ENCODE measurements at regions of chr21 and their contacts with region 1.

Region 1: DNA sequence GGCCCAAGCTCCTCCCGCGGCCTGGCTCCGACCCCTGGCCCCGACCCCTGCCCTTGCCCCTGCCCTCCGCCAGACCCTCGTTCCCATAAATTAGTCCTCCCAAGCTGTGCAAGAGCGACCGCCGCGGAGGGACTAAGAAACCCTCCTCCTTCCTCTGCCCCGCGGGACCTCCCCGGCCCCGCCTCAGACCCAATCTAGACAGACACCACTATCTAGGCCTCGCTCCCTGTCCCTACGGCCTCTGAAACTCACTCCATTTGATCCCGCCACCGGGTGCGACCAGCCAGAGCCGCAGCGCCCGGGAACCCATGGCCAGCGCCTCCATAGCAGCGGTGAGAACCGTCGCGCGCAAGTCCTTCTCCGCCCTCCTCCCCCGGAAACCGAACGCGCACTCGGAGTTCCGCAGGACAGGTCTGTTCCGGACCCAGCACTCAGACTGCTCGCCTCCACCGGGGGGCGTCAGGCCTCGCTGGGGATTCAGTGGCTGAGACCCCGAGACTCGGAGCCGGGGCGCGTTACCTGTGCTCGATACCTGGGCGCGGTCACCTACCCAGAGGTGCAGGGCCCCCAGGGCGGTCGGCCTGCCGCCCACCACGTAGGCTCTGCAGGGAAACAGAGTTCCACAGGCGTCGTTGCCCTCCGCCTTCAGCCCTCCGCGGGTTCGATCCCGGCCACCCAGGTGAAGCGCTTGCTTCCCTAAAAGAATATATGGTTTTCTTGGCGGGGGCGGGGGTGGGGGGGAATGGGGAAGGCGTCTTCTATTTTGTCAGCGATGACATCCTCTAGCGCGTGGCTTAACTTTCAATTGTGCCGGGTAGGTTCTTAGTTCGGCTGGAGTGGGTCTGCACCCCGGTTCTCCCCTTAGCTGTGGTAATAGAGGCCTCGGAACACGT is at the start of gene MRPL39:
- DNase-seq: peak; percentile 91
- ATAC-seq: peak; percentile 92
- H3K4me3 ChIP-seq: peak within 1 kb of the TSS; percentile 99
- H3K27ac ChIP-seq: peak within 1 kb of the TSS; percentile 56
- H3K4me1 ChIP-seq: peaks cover 22% of the 10 kb centered on the region
- H3K27me3 ChIP-seq: no peaks in the 10 kb centered on the region
- CTCF ChIP-seq: peak; percentile 70
- total RNA-seq, gene MRPL39: 62.0 and 107 TPM in 2 replicates

Region 2: GRCh38 chr21:25360593-25360992 is 246.8 kb before region 1 on chr21:
- CTCF ChIA-PET with region 1: no interaction called
- POLR2A ChIA-PET with region 1: no interaction called
- intact Hi-C with region 1: loop called (anchors 1 kb)
- DNase-seq: peak; percentile 40
- ATAC-seq: peak; percentile 57
- H3K4me3 ChIP-seq: no peak overlapping the region
- H3K27ac ChIP-seq: no peak overlapping the region
- H3K4me1 ChIP-seq: peaks cover 26% of the 10 kb centered on the region
- H3K27me3 ChIP-seq: no peaks in the 10 kb centered on the region
- CTCF ChIP-seq: peak; percentile 52

Region 3: DNA sequence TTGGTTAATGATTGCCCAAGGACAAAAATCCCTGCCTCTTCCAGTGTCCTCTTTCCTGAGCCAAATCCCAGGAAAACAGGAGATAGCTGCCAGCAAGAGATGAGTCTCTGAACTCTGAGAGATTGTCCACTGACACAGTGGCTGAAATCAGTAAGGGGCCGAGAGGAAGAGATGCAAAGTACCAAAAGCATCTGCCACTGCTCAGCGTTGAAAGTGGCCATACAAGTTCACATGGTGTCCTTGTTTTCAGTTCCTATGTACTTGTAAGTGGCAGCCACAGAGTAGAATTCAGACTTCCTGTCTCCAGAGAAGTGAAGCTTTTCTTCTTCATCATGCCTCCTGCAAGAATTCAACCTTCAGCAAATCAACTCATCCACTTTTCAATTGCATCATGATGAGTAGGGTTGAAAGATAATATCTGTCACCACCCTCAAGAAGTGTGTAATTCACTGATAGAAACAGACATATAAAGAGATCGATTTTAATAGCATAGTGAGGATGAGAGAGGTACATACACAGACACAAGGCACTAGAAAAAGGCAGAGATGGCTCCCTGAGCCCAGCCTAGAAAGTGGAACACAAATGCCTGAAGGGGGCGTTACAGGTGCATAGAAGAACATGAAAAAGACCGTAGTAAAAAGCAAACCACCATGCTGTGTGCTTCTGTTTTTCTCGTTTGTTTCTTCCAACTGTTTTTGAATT is 185.9 kb before region 1 on chr21:
- CTCF ChIA-PET with region 1: no interaction called
- POLR2A ChIA-PET with region 1: no interaction called
- intact Hi-C with region 1: loop called (anchors 2 kb)
- DNase-seq: peak; percentile 78
- ATAC-seq: peak; percentile 93
- H3K4me3 ChIP-seq: no peak overlapping the region
- H3K27ac ChIP-seq: no peak overlapping the region
- H3K4me1 ChIP-seq: no peaks in the 10 kb centered on the region
- H3K27me3 ChIP-seq: no peaks in the 10 kb centered on the region
- CTCF ChIP-seq: peak; percentile 81

Region 4: DNA sequence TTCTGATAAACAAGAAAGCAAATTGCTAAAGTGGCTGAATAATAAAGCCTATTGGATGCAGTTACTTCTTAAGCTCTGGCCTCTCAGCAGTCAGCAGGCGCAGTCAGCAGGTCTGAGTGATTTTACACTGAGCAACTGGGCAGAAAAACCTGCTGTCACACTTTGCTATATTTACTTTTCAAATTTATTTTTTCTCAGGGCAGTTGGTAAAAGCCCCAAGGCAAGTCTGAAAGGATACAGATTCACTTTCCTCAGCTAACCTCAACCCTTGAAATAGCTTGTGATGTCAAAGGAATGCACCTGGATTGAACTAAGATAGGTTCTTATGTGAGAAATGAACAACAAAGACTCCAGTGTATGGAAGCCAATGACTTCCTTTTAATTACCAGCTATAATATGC is 93.3 kb after region 1 on chr21:
- CTCF ChIA-PET with region 1: no interaction called
- POLR2A ChIA-PET with region 1: no interaction called
- intact Hi-C with region 1: loop called (anchors 2 kb)
- DNase-seq: peak; percentile 82
- ATAC-seq: peak; percentile 60
- H3K4me3 ChIP-seq: no peak overlapping the region
- H3K27ac ChIP-seq: peak overlapping the region; percentile 76
- H3K4me1 ChIP-seq: peaks cover 28% of the 10 kb centered on the region
- H3K27me3 ChIP-seq: no peaks in the 10 kb centered on the region
- CTCF ChIP-seq: no peak

Region 5: DNA sequence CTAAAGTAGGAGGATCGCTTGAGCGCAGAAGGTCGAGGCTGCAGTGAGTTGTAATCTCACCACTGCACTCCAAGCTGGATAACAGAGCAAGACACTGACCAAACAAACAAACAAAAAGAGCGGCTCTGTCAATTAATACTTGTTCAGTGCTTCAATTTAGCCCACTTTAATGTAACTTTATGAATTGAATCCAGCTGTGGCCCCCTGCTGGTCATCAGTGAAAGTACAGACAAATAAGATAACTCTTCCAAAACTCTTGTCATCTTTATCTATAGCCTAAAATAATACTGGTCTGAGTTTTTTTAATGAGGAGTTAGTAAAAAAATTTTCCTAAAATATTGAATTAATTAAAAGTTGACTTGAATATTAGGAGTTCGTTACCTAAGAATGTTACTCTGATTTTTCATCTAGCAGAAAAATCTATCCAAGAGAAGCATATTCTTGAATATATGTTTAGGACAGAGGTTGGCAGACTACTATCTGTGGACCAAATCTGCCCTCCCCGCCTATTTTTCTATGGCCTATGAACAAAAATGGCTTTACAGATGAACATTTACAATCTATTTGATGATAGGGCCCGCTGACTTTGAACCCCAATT is 101.2 kb after region 1 on chr21:
- CTCF ChIA-PET with region 1: no interaction called
- POLR2A ChIA-PET with region 1: no interaction called
- intact Hi-C with region 1: loop called (anchors 1 kb)
- DNase-seq: peak; percentile 65
- ATAC-seq: peak; percentile 49
- H3K4me3 ChIP-seq: no peak overlapping the region
- H3K27ac ChIP-seq: no peak overlapping the region
- H3K4me1 ChIP-seq: no peaks in the 10 kb centered on the region
- H3K27me3 ChIP-seq: no peaks in the 10 kb centered on the region
- CTCF ChIP-seq: peak; percentile 88

Region 6: GRCh38 chr21:25734904-25735645 is 127.7 kb after region 1 on chr21 and contains the starts of genes ATP5PF and GABPA:
- CTCF ChIA-PET with region 1: no interaction called
- POLR2A ChIA-PET with region 1: no interaction called
- intact Hi-C with region 1: loop called (anchors 1 kb)
- DNase-seq: peak; percentile 98
- ATAC-seq: peak; percentile 90
- H3K4me3 ChIP-seq: peak within 1 kb of the TSS; percentile 93
- H3K27ac ChIP-seq: peak within 1 kb of the TSS; percentile 97
- H3K4me1 ChIP-seq: peaks cover 18% of the 10 kb centered on the region; the same call in 1 of the 2 replicates
- H3K27me3 ChIP-seq: no peaks in the 10 kb centered on the region
- CTCF ChIP-seq: no peak
- total RNA-seq, gene ATP5PF: 170 and 184 TPM in 2 replicates
- total RNA-seq, gene GABPA: 19.0 and 19.9 TPM in 2 replicates

Region 7: GRCh38 chr21:25862596-25862995 is 255.2 kb after region 1 on chr21:
- CTCF ChIA-PET with region 1: no interaction called
- POLR2A ChIA-PET with region 1: no interaction called
- intact Hi-C with region 1: loop called (anchors 1 kb)
- DNase-seq: peak; percentile 74
- ATAC-seq: peak; percentile 57
- H3K4me3 ChIP-seq: no peak overlapping the region
- H3K27ac ChIP-seq: no peak overlapping the region
- H3K4me1 ChIP-seq: no peaks in the 10 kb centered on the region
- H3K27me3 ChIP-seq: no peaks in the 10 kb centered on the region
- CTCF ChIP-seq: peak; percentile 96

Measured in PC-3 (cell line).